ENCODE measurements at regions of chr10 and their contacts with region 1.

Region 1: DNA sequence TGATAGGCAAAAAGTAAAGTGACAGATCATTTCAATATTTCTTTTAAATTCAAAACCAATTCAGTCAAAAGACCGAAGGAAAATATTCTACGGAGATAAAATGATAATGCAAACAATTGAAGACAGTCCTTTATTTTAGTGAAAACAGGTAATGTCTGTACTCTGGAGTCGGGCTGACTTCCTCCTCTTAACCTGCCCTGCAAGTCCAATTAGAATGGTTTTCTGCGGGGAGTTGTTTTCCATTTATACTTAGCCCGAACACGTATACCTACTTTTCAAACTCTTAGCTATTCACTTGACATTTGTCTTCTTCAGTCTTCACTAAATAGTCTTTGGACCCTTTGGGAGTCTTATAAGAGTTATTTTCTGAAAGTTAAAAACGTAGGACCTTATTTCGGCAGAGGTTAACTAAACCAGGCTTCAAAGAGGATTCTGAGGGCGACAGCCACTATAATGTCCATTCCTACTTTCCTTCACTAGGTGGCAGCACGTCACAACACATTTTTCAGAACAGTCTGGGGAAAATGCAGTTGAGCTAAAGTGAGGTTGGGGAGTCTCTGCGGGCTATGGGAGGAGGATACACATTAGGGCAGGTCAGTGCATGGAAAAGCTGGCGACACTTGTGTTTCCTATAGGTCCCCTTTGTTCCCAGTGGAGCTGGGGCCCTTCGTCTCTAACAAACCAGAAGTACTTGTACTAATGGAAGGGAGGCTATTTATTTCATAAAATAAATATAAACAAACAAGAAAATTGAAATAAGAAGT is 472.0 kb downstream of the KCNMA1 start:
- DNase-seq: peak in 1 of 2 donors; percentile 14
- ATAC-seq: peak in 7 of 8 donors; percentile 29 to 66 (median 56)
- H3K4me3 ChIP-seq: no peak overlapping the region
- H3K27ac ChIP-seq: no peak overlapping the region
- H3K4me1 ChIP-seq: peaks cover 0 to 19% (median 0%) of the 10 kb centered on the region in 9 donors
- H3K27me3 ChIP-seq: peaks cover 0 to 32% (median 19%) of the 10 kb centered on the region in 7 donors
- CTCF ChIP-seq: peak; percentile 47 to 80 (median 76)

Region 2: GRCh38 chr10:77290528-77291155 is 125.0 kb after region 1 on chr10:
- intact Hi-C with region 1: no loop called
- DNase-seq: no peak
- ATAC-seq: no peak
- H3K4me3 ChIP-seq: no peak overlapping the region
- H3K27ac ChIP-seq: no peak overlapping the region
- H3K4me1 ChIP-seq: peaks cover 0 to 13% (median 9%) of the 10 kb centered on the region in 9 donors
- H3K27me3 ChIP-seq: peaks cover 0 to 62% (median 26%) of the 10 kb centered on the region in 7 donors
- CTCF ChIP-seq: no peak

Region 3: DNA sequence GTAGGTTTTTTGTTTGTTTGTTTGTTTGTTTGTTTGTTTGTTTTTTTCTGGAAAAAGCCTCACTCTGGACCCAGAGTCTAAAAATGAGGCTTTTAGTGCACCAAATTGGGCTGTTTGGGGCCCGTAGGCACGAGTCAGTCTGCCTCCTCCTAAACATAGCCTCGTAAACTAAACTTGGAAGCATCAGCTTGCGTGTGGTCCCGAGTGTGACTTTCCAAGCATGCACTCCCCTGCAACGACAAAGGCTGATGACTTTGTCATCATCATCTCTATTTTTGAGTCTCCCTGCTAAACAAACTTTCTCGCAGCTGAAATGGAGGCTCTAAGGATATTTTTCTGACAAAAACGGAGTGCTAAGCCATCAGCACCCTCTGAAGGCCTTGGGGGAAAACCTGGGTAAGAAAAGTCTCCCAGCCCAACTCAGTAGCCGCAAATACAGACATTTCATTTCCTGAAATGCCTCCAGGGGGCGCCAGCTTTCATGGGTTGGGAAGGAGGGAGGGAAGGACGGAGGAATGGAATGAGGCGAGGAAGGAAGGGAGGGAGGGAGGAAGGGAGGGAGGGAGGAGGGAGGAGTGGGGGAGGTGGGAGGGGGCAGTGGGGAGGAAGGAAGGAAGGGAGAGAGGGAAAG is 226.1 kb after region 1 on chr10:
- intact Hi-C with region 1: loop called in 8 of 10 experiments (anchors 5 to 10 kb)
- DNase-seq: peak; percentile 60 to 78
- ATAC-seq: peak in 7 of 8 donors; percentile 65 to 82 (median 75)
- H3K4me3 ChIP-seq: no peak overlapping the region
- H3K27ac ChIP-seq: no peak overlapping the region
- H3K4me1 ChIP-seq: peaks cover 0 to 29% (median 12%) of the 10 kb centered on the region in 9 donors
- H3K27me3 ChIP-seq: peaks cover 0 to 23% (median 3%) of the 10 kb centered on the region in 7 donors
- CTCF ChIP-seq: peak in 8 of 9 donors; percentile 15 to 62 (median 56)

Region 4: DNA sequence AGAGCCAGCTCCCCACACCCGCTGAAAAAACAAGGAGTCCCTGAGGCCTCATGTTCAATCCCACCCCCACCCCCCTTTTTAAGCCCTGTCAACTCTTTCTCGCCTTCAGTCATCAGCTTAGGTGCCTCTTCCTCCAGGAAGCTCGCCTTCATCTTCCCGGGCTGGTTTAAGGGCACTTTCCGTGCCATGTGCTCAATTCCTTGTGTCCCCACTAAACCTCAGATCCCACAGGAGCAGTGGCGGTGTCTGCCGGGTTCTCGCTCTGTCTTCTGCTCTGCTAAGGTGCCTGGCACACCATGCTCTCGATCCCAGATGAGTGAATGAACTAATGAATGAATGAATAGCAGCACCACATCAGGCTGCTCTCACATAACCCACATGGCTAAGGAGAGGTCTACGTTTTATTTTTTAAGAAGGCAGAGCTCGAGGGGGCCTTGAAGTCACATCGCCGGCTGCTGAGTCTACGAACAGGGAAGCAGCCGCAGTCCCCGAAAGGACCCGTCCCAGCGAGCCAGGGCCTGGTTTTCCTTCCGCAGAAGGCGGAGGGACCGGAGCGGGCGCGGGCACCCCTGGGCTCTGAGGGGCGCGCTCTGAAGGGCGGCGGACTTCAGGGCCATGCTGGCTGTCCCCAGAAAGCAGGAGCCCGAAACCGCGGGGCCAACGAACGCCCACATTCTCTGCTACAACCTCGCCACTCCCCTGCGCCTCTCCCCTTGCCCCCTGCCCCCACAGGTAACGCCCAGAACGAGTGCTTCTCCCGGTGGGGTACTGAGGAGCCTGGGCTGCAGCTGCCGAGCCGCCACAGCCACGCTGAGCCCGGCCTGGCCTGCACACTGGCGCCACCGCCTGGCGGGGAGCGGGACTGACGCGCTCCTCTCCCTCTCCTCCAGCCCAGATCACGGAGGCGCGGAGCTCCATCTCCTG is 545.4 kb after region 1 on chr10:
- intact Hi-C with region 1: loop called in 8 of 10 experiments (anchors 5 to 10 kb)
- DNase-seq: peak; percentile 59 to 82
- ATAC-seq: peak; percentile 92 to 96 (median 93)
- H3K4me3 ChIP-seq: peak overlapping the region in 9 of 10 donors; percentile 31 to 52 (median 46)
- H3K27ac ChIP-seq: no peak overlapping the region
- H3K4me1 ChIP-seq: peaks cover 0 to 9% (median 5%) of the 10 kb centered on the region in 9 donors
- H3K27me3 ChIP-seq: peaks cover 0 to 70% (median 45%) of the 10 kb centered on the region in 7 donors
- CTCF ChIP-seq: peak; percentile 91 to 99 (median 95)

Measured in heart right ventricle (tissue), 16 donors.